Thyroid gland (tissue), 4 donors: ENCODE measurements at regions of chr10 and their contacts with region 1.

Region 1: GRCh38 chr10:88986549-88987242 is 3.9 kb upstream of the FAS start:
- DNase-seq: peak; percentile 20 to 35
- H3K4me3 ChIP-seq: no peak overlapping the region
- H3K27ac ChIP-seq: no peak overlapping the region
- H3K4me1 ChIP-seq: peaks cover 5 to 6% of the 10 kb centered on the region in 2 donors
- H3K27me3 ChIP-seq: no peaks in the 10 kb centered on the region
- CTCF ChIP-seq: peak; percentile 60 to 94 (median 74)
- POLR2A ChIP-seq: no peak

Region 2: GRCh38 chr10:88932539-88933256 is 54.0 kb before region 1 on chr10:
- intact Hi-C with region 1: loop called (anchors 2 kb)
- DNase-seq: peak; percentile 69 to 73
- H3K4me3 ChIP-seq: no peak overlapping the region
- H3K27ac ChIP-seq: peak overlapping the region; percentile 28 to 52 (median 38)
- H3K4me1 ChIP-seq: peaks cover 16 to 26% of the 10 kb centered on the region in 2 donors
- H3K27me3 ChIP-seq: no peaks in the 10 kb centered on the region
- CTCF ChIP-seq: peak; percentile 67 to 99 (median 91)
- POLR2A ChIP-seq: no peak